ENCODE measurements at regions of chr5 and their contacts with region 1.

Region 1: DNA sequence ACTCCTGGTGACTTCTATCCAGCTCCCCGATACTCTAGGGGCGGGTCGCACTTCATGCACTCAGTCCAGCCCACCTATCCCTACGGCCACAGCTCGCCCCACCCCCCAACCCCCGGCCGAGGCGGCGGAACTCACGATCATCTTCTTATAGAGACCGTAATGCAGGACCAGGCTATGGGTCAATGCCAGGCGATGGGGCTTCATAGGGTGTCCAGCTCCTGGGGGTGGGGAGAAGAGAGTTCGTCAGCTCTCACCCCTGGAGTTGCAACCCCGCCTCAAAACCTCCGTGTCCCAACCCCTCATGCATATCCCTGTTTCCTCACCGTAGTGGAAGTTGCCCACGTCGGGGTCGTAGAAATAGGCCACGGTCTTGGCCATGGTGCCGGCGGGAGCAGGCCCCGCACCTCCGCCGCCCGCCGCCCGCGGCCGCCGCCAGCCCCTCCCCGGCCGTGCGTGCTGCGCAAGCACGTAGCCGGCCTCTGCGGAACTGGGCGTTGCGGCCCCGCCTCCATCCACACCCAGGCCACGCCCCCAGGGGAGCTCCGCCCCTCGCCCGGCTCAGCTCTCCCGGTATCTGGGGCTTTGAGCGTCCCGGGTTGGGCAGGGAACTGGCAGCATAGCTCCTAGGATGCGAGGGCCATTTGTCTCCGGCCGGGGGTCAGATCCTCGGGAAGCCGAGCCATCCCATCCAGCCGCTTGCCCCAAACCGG is at the starts of genes HDAC3 and RELL2:
- DNase-seq: peak; percentile 89 to 94 (median 91)
- H3K4me3 ChIP-seq: peak within 1 kb of the TSS; percentile 97
- H3K4me3 Mint-ChIP-seq: peak within 1 kb of the TSS; percentile 92 to 96 (median 94)
- H3K27ac ChIP-seq: peak within 1 kb of the TSS; percentile 85
- H3K27ac Mint-ChIP-seq: peak within 1 kb of the TSS; percentile 90 to 98 (median 93)
- H3K4me1 ChIP-seq: peaks cover 35% of the 10 kb centered on the region
- H3K4me1 Mint-ChIP-seq: peaks cover 32 to 55% (median 50%) of the 10 kb centered on the region in 3 donors
- H3K27me3 ChIP-seq: no peaks in the 10 kb centered on the region
- H3K27me3 Mint-ChIP-seq: peaks cover 0 to 1% of the 10 kb centered on the region in 2 donors
- total RNA-seq, gene HDAC3: 74.8 to 78.6 TPM
- total RNA-seq, gene RELL2: 24.8 to 26.2 TPM

Region 2: GRCh38 chr5:141598391-141599350 is 37.9 kb before region 1 on chr5:
- CTCF ChIA-PET with region 1: interaction called, 37 read pairs
- POLR2A ChIA-PET with region 1: no interaction called
- DNase-seq: no peak
- H3K4me3 ChIP-seq: no peak overlapping the region
- H3K4me3 Mint-ChIP-seq: peak overlapping the region in 6 of 7 donors; percentile 63 to 72 (median 71)
- H3K27ac ChIP-seq: no peak overlapping the region
- H3K27ac Mint-ChIP-seq: peak overlapping the region; percentile 82 to 97 (median 90)
- H3K4me1 ChIP-seq: peaks cover 69% of the 10 kb centered on the region
- H3K4me1 Mint-ChIP-seq: peaks cover 74 to 89% (median 88%) of the 10 kb centered on the region in 3 donors
- H3K27me3 ChIP-seq: no peaks in the 10 kb centered on the region
- H3K27me3 Mint-ChIP-seq: no peaks in the 10 kb centered on the region

Region 3: DNA sequence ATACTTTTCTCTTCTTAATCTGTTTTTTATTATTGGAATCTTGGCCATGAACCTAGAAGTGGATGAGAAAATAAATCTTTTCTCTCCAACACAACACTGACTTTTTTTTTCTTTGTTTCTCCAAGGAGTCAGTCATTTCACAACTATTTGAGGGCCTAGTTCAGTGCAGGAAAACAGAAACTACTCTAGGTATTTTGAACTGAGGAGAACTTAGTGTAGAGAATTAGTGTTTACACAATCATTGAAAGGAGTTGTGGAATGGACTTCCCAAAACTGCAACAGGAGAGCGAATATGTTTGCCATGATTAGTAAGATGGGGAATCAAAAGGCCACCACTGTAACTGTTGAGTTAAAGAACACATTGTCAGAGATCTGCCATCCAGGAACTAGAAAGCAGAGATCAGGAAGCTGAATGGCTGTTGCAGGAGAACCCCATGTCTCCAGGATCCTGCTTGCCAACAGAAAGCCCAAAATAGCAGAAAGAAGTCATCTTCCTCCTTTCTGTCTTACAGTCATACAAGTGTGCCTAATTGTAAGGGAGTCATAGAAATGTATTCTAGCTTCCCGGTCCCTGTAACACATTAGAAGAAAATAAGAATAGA is 262.0 kb after region 1 on chr5:
- CTCF ChIA-PET with region 1: no interaction called
- POLR2A ChIA-PET with region 1: no interaction called
- DNase-seq: no peak
- H3K4me3 ChIP-seq: no peak overlapping the region
- H3K4me3 Mint-ChIP-seq: no peak overlapping the region
- H3K27ac ChIP-seq: no peak overlapping the region
- H3K27ac Mint-ChIP-seq: peak overlapping the region in 1 of 8 donors; percentile 22
- H3K4me1 ChIP-seq: no peaks in the 10 kb centered on the region
- H3K4me1 Mint-ChIP-seq: no peaks in the 10 kb centered on the region
- H3K27me3 ChIP-seq: no peaks in the 10 kb centered on the region
- H3K27me3 Mint-ChIP-seq: peaks cover 14 to 47% of the 10 kb centered on the region in 2 donors